ENCODE measurements at regions of chr1 and their contacts with region 1.

Region 1: GRCh38 chr1:207885129-207886032 is 25.5 kb downstream of the CD34 start:
- DNase-seq: peak; percentile 50 to 75 (median 68)
- ATAC-seq: peak; percentile 86
- H3K4me3 ChIP-seq: no peak overlapping the region
- H3K4me3 Mint-ChIP-seq: peak overlapping the region in 5 of 10 donors; percentile 21 to 91 (median 29)
- H3K27ac ChIP-seq: no peak overlapping the region
- H3K27ac Mint-ChIP-seq: peak overlapping the region; percentile 63 to 99 (median 96)
- H3K4me1 ChIP-seq: peaks cover 21 to 25% of the 10 kb centered on the region in 2 donors
- H3K4me1 Mint-ChIP-seq: peaks cover 34 to 47% (median 44%) of the 10 kb centered on the region in 7 donors
- H3K27me3 ChIP-seq: no peaks in the 10 kb centered on the region
- H3K27me3 Mint-ChIP-seq: peaks cover 0 to 14% (median 5%) of the 10 kb centered on the region in 5 donors

Region 2: GRCh38 chr1:205925730-205926129 is 1959.7 kb before region 1 on chr1:
- CTCF ChIA-PET with region 1: no interaction called
- POLR2A ChIA-PET with region 1: no interaction called
- intact Hi-C with region 1: no loop called
- DNase-seq: no peak
- ATAC-seq: no peak
- H3K4me3 ChIP-seq: no peak overlapping the region
- H3K4me3 Mint-ChIP-seq: no peak overlapping the region
- H3K27ac ChIP-seq: no peak overlapping the region
- H3K27ac Mint-ChIP-seq: no peak overlapping the region
- H3K4me1 ChIP-seq: no peaks in the 10 kb centered on the region
- H3K4me1 Mint-ChIP-seq: no peaks in the 10 kb centered on the region
- H3K27me3 ChIP-seq: no peaks in the 10 kb centered on the region
- H3K27me3 Mint-ChIP-seq: peaks cover 0 to 4% (median 0%) of the 10 kb centered on the region in 5 donors

Region 3: GRCh38 chr1:207822602-207823451 is 62.6 kb before region 1 on chr1:
- CTCF ChIA-PET with region 1: interaction called, 15 read pairs
- POLR2A ChIA-PET with region 1: interaction called, 75 read pairs
- intact Hi-C with region 1: loop called (anchors 1 kb)
- DNase-seq: peak; percentile 35 to 89 (median 86)
- ATAC-seq: peak; percentile 65
- H3K4me3 ChIP-seq: peak overlapping the region; percentile 87
- H3K4me3 Mint-ChIP-seq: peak overlapping the region; percentile 88 to 96 (median 95)
- H3K27ac ChIP-seq: peak overlapping the region; percentile 88
- H3K27ac Mint-ChIP-seq: peak overlapping the region; percentile 96 to 100 (median 98)
- H3K4me1 ChIP-seq: peaks cover 29 to 61% of the 10 kb centered on the region in 2 donors
- H3K4me1 Mint-ChIP-seq: peaks cover 72 to 96% (median 89%) of the 10 kb centered on the region in 7 donors
- H3K27me3 ChIP-seq: no peaks in the 10 kb centered on the region
- H3K27me3 Mint-ChIP-seq: peaks cover 0 to 6% (median 0%) of the 10 kb centered on the region in 5 donors

Region 4: DNA sequence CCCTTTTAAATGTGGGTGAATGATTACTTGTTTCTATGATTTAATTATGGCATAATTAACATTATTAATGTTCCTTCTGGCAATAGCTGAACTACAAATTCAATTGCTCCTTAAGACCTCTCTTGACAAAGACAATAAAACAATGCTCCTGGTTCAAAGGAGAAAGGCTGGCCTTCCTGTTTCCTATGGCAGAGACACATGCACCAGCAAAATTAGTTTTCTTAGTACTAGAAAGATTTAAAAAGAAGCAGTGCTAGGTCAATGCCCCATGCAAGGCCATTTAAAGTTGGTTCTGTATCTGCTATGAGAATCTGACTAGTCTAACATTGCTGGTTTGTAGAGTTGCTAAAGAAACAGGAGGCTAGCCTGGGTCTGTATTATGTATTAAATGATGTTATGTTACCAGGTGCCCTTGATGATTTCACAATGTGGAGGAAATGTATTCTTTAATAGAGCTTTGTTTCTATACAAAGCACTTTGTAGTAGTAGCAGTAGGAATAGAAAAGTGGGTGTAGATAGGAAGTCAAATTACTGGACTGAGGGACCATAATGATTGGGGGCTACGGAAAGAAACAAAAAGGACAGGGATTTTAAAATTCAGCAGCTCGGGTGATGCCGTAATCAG is 64.3 kb after region 1 on chr1:
- CTCF ChIA-PET with region 1: no interaction called
- POLR2A ChIA-PET with region 1: no interaction called
- intact Hi-C with region 1: no loop called
- DNase-seq: no peak
- ATAC-seq: no peak
- H3K4me3 ChIP-seq: no peak overlapping the region
- H3K4me3 Mint-ChIP-seq: no peak overlapping the region
- H3K27ac ChIP-seq: no peak overlapping the region
- H3K27ac Mint-ChIP-seq: no peak overlapping the region
- H3K4me1 ChIP-seq: no peaks in the 10 kb centered on the region
- H3K4me1 Mint-ChIP-seq: no peaks in the 10 kb centered on the region
- H3K27me3 ChIP-seq: no peaks in the 10 kb centered on the region
- H3K27me3 Mint-ChIP-seq: peaks cover 5 to 41% (median 13%) of the 10 kb centered on the region in 5 donors

Region 5: DNA sequence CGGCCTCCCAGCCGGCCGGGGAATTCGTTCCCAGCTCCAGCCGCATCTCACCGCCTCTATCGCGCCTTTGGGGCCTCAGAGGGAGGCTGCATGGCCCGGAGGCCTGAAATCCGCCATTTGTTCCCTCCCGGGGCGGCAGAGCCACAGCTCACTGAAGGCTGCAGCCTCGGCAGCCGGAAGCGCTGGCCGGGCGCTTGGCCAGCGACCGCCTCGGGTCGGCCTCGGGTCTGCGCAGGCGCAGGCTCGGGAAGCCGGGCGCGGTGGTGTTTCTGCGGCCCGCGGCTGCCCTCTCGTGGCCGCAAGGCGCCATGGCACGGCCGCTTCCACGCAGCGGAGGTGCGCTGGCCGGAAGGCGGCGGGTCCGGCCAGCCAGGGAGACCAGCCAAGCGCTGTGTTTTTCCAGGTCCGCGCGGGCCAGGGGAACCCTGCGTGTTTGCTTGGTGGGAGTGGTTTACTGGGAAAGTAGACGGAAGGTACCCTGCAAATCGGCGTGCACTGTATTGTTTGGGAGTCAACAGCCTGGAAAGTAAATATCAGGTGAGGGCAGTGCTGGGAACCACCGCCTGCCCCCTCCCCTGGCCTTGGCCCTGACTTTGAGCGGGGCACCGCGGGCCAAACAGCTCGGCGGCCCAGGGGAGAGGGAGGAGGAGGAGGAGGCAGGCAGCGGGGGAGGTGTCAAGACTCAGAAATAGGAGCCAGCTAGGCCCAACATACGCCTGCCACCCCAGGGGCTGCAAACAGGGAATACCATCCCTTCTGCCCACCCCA is 78.2 kb after region 1 on chr1:
- CTCF ChIA-PET with region 1: interaction called, 60 read pairs
- POLR2A ChIA-PET with region 1: interaction called, 18 read pairs
- intact Hi-C with region 1: loop called (anchors 1 kb)
- DNase-seq: peak; percentile 61 to 94 (median 80)
- ATAC-seq: peak; percentile 95
- H3K4me3 ChIP-seq: peak overlapping the region; percentile 87
- H3K4me3 Mint-ChIP-seq: peak overlapping the region; percentile 78 to 92 (median 84)
- H3K27ac ChIP-seq: peak overlapping the region; percentile 63
- H3K27ac Mint-ChIP-seq: peak overlapping the region in 8 of 9 donors; percentile 12 to 83 (median 68)
- H3K4me1 ChIP-seq: peaks cover 3 to 5% of the 10 kb centered on the region in 2 donors
- H3K4me1 Mint-ChIP-seq: peaks cover 6 to 15% (median 9%) of the 10 kb centered on the region in 7 donors
- H3K27me3 ChIP-seq: peaks cover 0 to 7% of the 10 kb centered on the region in 2 donors
- H3K27me3 Mint-ChIP-seq: peaks cover 10 to 50% (median 22%) of the 10 kb centered on the region in 5 donors

Region 6: GRCh38 chr1:208085655-208086515 is 200.5 kb after region 1 on chr1:
- CTCF ChIA-PET with region 1: no interaction called
- POLR2A ChIA-PET with region 1: no interaction called
- intact Hi-C with region 1: loop called in 1 of 2 experiments (anchors 1 kb)
- DNase-seq: no peak
- ATAC-seq: no peak
- H3K4me3 ChIP-seq: peak overlapping the region; percentile 60
- H3K4me3 Mint-ChIP-seq: peak overlapping the region; percentile 78 to 92 (median 82)
- H3K27ac ChIP-seq: peak overlapping the region; percentile 52
- H3K27ac Mint-ChIP-seq: peak overlapping the region; percentile 82 to 94 (median 91)
- H3K4me1 ChIP-seq: peaks cover 6% of the 10 kb centered on the region in 2 donors
- H3K4me1 Mint-ChIP-seq: peaks cover 10 to 28% (median 21%) of the 10 kb centered on the region in 7 donors
- H3K27me3 ChIP-seq: no peaks in the 10 kb centered on the region
- H3K27me3 Mint-ChIP-seq: peaks cover 0 to 4% (median 0%) of the 10 kb centered on the region in 5 donors

Region 7: DNA sequence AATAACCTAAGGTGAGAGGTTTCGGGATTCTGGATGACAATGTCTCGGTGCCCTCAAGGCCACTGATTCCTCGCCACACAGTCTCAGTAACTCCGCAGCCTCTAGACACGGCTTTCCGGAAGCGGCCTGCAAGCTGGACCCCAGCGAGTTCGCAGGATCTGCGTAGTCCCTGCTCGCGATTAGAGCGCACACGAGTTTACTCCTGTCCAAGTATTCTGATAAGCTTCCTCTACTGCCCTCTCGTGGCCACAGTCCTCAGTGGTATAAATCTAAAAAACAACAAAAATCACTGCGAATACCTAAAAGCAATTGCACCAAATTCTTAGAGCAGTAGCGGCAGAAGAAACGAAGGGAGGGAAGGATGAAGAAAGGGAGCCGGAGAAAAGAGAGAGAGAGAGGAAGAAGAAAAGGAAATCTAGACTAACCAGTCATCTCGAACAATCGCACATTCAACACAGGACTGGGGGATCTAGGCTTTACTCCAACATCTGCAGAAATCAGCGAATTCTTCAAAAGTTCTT is 359.9 kb after region 1 on chr1:
- CTCF ChIA-PET with region 1: interaction called, 3 read pairs
- POLR2A ChIA-PET with region 1: no interaction called
- intact Hi-C with region 1: loop called in 1 of 2 experiments (anchors 10 kb)
- DNase-seq: peak; percentile 36 to 67 (median 59)
- ATAC-seq: peak; percentile 77
- H3K4me3 ChIP-seq: peak overlapping the region; percentile 51
- H3K4me3 Mint-ChIP-seq: peak overlapping the region; percentile 75 to 92 (median 84)
- H3K27ac ChIP-seq: no peak overlapping the region
- H3K27ac Mint-ChIP-seq: peak overlapping the region in 5 of 9 donors; percentile 3 to 65 (median 37)
- H3K4me1 ChIP-seq: no peaks in the 10 kb centered on the region
- H3K4me1 Mint-ChIP-seq: peaks cover 6 to 17% (median 10%) of the 10 kb centered on the region in 7 donors
- H3K27me3 ChIP-seq: peaks cover 0 to 5% of the 10 kb centered on the region in 2 donors
- H3K27me3 Mint-ChIP-seq: peaks cover 13 to 58% (median 17%) of the 10 kb centered on the region in 5 donors

Region 8: DNA sequence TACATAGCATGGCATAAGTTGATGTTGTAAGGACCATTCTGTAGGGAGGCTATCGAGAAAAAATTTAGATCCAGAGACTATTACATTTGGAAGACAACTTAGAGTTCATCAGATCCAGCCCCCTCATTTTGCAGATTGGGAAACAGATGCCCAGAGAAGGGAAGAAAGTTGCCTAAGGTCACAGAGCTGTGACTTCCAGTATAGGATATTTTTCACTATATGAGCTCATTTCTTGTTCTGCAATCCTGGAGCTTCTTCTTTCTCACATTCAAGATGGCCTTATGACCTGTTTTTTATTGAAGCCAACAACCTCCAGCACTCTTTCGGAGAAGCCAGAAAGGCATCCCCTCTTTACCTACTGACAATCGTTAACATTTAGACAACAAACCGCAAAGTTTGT is 780.6 kb after region 1 on chr1:
- CTCF ChIA-PET with region 1: no interaction called
- POLR2A ChIA-PET with region 1: no interaction called
- intact Hi-C with region 1: no loop called
- DNase-seq: no peak
- ATAC-seq: no peak
- H3K4me3 ChIP-seq: no peak overlapping the region
- H3K4me3 Mint-ChIP-seq: no peak overlapping the region
- H3K27ac ChIP-seq: no peak overlapping the region
- H3K27ac Mint-ChIP-seq: no peak overlapping the region
- H3K4me1 ChIP-seq: no peaks in the 10 kb centered on the region
- H3K4me1 Mint-ChIP-seq: no peaks in the 10 kb centered on the region
- H3K27me3 ChIP-seq: no peaks in the 10 kb centered on the region
- H3K27me3 Mint-ChIP-seq: peaks cover 0 to 10% (median 3%) of the 10 kb centered on the region in 5 donors

Measured in naive thymus-derived CD4-positive, alpha-beta T cell (primary cell).